ENCODE measurements at regions of chr3 and their contacts with region 1.

Region 1: GRCh38 chr3:185498503-185499396 is at the start of gene TMEM41A:
- DNase-seq: peak; percentile 73 to 98
- H3K4me3 ChIP-seq: peak within 1 kb of the TSS; percentile 90 to 98 (median 91)
- H3K27ac ChIP-seq: peak within 1 kb of the TSS; percentile 66
- H3K4me1 ChIP-seq: no peaks in the 10 kb centered on the region
- H3K27me3 ChIP-seq: no peaks in the 10 kb centered on the region
- CTCF ChIP-seq: peak in 2 of 3 experiments; percentile 22 to 24; a peak in 2 of 4 replicates
- EP300 ChIP-seq: peak in 1 of 2 experiments; percentile 78; a peak in 1 of 3 replicates
- POLR2A ChIP-seq: peak; percentile 88 to 98
- RAD21 ChIP-seq: peak; percentile 9 to 36; a peak in 3 of 4 replicates
- total RNA-seq, gene TMEM41A: 13.5 and 14.1 TPM in 2 replicates

Region 2: GRCh38 chr3:185572183-185572582 is 73.4 kb after region 1 on chr3:
- CTCF ChIA-PET with region 1: interaction called, 11 read pairs
- POLR2A ChIA-PET with region 1: interaction called, 3 read pairs
- DNase-seq: no peak
- H3K4me3 ChIP-seq: no peak overlapping the region
- H3K27ac ChIP-seq: no peak overlapping the region
- H3K4me1 ChIP-seq: peaks cover 0 to 3% (median under 1%) of the 10 kb centered on the region in 4 experiments; a peak in 1 of 7 replicates
- H3K27me3 ChIP-seq: no peaks in the 10 kb centered on the region
- CTCF ChIP-seq: no peak
- EP300 ChIP-seq: no peak
- POLR2A ChIP-seq: no peak
- RAD21 ChIP-seq: no peak

Region 3: GRCh38 chr3:185637388-185637787 is 138.6 kb after region 1 on chr3:
- CTCF ChIA-PET with region 1: no interaction called
- POLR2A ChIA-PET with region 1: no interaction called
- DNase-seq: no peak
- H3K4me3 ChIP-seq: no peak overlapping the region
- H3K27ac ChIP-seq: no peak overlapping the region
- H3K4me1 ChIP-seq: no peaks in the 10 kb centered on the region; a peak in 1 of 7 replicates
- H3K27me3 ChIP-seq: no peaks in the 10 kb centered on the region
- CTCF ChIP-seq: no peak
- EP300 ChIP-seq: no peak
- POLR2A ChIP-seq: no peak
- RAD21 ChIP-seq: no peak

Measured in H1 (cell line).